ENCODE measurements at regions of chr5 and their contacts with region 1.

Region 1: DNA sequence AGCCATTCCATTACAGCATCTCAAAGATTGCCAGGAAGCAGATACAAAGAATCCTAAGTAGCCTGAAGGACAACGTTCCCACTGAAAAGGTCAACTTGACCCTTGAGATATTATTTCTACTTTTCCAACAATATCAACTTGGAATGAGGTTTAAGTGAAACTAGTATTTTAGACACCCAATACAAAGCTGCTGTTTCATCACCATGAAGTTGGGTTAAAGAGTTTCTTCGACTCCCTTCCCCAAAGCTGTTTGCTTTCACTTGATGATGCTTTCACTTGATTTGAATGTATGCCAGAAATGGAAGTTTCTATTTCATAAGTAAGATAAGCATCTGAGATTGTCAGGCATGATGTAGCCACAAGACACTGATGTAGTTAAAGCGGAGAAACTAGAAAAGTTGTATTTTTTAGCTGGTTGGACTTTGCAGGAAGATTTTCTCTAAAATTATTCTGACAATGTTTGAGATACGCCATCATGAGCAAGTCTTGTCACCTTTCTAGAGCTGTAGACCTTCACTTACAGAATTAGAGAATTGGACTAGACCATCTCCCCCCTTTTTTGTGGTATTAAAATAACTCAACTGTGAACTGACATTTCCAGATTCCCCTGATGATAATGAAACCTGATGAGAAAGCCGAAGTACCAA is 20.1 kb downstream of the MOCS2 start:
- DNase-seq: peak; percentile 7
- ATAC-seq: peak; percentile 84
- H3K4me3 ChIP-seq: no peak overlapping the region
- H3K27ac ChIP-seq: no peak overlapping the region
- H3K4me1 ChIP-seq: peaks cover 11% of the 10 kb centered on the region
- H3K27me3 ChIP-seq: no peaks in the 10 kb centered on the region
- CTCF ChIP-seq: no peak
- EP300 ChIP-seq: no peak
- POLR2A ChIP-seq: no peak
- RAD21 ChIP-seq: no peak

Region 2: DNA sequence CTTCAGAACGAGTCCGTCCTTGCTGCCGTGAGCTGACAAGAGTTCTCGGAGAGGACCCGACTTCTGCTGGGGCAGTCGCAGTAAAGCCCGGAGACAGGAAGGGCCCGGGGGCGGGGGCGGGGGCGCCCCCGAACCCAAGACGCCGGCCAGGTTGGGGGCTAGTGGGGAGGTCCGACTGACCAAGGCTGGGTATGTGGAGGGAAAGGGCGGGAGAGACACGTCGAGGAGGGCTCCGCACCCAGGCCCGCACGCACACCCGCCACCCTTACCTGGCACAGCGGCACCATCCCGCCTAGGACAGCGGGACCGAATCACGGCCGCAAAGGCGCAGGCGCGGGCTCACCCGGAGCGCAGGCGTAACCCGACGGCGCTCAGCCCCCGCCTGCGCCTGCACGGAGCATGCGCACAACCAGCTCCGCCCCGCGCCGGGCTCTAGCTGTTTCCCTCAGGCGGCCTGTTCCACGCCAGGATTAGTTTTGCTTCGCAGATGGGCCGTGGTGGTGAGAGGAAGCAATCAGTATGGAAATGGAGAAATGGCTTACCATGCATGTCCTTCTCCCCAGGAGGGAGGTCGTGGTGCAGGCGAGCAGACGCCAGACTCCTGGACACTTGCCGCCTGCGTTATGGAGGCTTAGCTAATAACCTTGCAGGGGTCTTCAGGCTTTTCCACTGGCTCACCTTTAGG is 20.1 kb after region 1 on chr5 and contains the start of gene MOCS2:
- CTCF ChIA-PET with region 1: interaction called, 38 read pairs
- POLR2A ChIA-PET with region 1: no interaction called
- RAD21 ChIA-PET with region 1: interaction called, 3 read pairs
- SMC1A ChIA-PET with region 1: interaction called, 12 read pairs
- in situ Hi-C with region 1: no loop called
- intact Hi-C with region 1: no loop called
- DNase-seq: peak; percentile 64
- ATAC-seq: peak; percentile 99
- H3K4me3 ChIP-seq: peak within 1 kb of the TSS; percentile 68
- H3K27ac ChIP-seq: peak within 1 kb of the TSS; percentile 65
- H3K4me1 ChIP-seq: peaks cover 5% of the 10 kb centered on the region; the same call in 1 of the 2 replicates
- H3K27me3 ChIP-seq: no peaks in the 10 kb centered on the region
- CTCF ChIP-seq: no peak
- EP300 ChIP-seq: no peak
- POLR2A ChIP-seq: peak; percentile 97
- RAD21 ChIP-seq: no peak
- polyA plus RNA-seq, gene MOCS2: 23.4 to 24.1 TPM

Measured in GM12878 (cell line).